Mammary epithelial cell (primary cell): ENCODE measurements at regions of chr7 and their contacts with region 1.

Region 1: DNA sequence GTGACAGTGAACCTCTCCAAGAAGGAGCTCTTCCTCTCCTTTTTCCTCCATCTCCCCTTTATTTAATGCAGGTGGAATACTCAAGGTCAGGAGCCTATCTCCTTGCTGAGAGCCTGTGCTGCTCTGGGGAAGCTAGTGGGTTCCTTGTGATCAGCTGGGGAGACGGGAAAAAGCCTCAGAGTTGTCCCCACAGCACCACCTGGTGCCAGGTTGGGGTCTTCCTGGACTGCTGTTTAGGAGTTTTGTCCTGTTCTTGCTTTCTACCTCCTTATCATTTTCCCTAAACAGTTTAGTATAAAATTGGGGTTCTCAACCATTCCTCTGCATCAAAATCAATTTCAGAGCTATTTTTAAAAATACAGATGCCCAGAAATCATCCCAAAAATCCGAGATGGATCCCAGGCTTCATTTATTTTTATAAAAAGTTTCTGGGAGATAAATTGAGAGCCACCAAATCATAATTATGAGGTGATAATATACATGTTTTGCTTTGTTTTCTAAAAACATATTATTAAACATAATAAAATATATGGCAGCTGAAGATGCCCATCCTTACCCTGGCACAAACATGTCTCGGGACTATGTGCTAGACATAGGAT is 44.3 kb downstream of the MACC1 start:
- DNase-seq: peak; percentile 41
- H3K4me3 ChIP-seq: no peak overlapping the region
- H3K27ac ChIP-seq: no peak overlapping the region
- H3K4me1 ChIP-seq: no peaks in the 10 kb centered on the region
- H3K27me3 ChIP-seq: no peaks in the 10 kb centered on the region
- CTCF ChIP-seq: peak; percentile 70 to 81

Region 2: GRCh38 chr7:19982841-19983835 is 189.7 kb before region 1 on chr7:
- CTCF ChIA-PET with region 1: no interaction called
- dilution Hi-C with region 1: no loop called
- in situ Hi-C with region 1: no loop called
- intact Hi-C with region 1: loop called (anchors 1 kb)
- DNase-seq: peak; percentile 45
- H3K4me3 ChIP-seq: no peak overlapping the region
- H3K27ac ChIP-seq: no peak overlapping the region
- H3K4me1 ChIP-seq: no peaks in the 10 kb centered on the region
- H3K27me3 ChIP-seq: no peaks in the 10 kb centered on the region
- CTCF ChIP-seq: peak in 1 of 2 donors; percentile 40

Region 3: GRCh38 chr7:19999681-20000080 is 173.2 kb before region 1 on chr7:
- CTCF ChIA-PET with region 1: interaction called, 17 read pairs
- dilution Hi-C with region 1: no loop called
- in situ Hi-C with region 1: no loop called
- intact Hi-C with region 1: no loop called
- DNase-seq: no peak
- H3K4me3 ChIP-seq: no peak overlapping the region
- H3K27ac ChIP-seq: no peak overlapping the region
- H3K4me1 ChIP-seq: no peaks in the 10 kb centered on the region
- H3K27me3 ChIP-seq: no peaks in the 10 kb centered on the region
- CTCF ChIP-seq: no peak